ENCODE measurements at regions of chr3 and their contacts with region 1.

Region 1: DNA sequence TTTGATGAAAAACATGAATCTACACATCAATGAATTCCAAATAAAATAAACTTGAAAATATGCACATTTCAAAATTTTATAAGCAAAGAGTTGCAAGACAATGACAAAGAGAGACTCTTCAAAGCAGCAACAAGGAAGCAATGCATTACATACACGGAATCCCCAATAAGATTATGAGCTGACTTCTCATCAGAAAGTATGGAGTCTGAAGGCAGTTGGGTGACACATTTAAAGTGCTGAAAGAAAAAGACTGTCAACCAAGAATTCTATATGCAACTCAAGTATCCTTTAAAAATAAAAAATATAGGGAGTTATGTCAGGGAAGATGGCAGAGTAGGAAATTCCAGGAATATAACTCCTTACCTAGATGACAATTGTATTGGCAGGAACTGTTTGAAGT is 46.5 kb upstream of the PRSS50 start:
- DNase-seq: no peak
- ATAC-seq: no peak
- H3K4me3 ChIP-seq: no peak overlapping the region
- H3K27ac ChIP-seq: no peak overlapping the region
- H3K4me1 ChIP-seq: no peaks in the 10 kb centered on the region
- H3K27me3 ChIP-seq: no peaks in the 10 kb centered on the region
- CTCF ChIP-seq: no peak

Region 2: GRCh38 chr3:46656778-46657556 is 107.2 kb before region 1 on chr3:
- CTCF ChIA-PET with region 1: no interaction called
- POLR2A ChIA-PET with region 1: interaction called, 12 read pairs
- in situ Hi-C with region 1: no loop called
- intact Hi-C with region 1: no loop called
- DNase-seq: no peak
- ATAC-seq: no peak
- H3K4me3 ChIP-seq: no peak overlapping the region
- H3K27ac ChIP-seq: no peak overlapping the region
- H3K4me1 ChIP-seq: no peaks in the 10 kb centered on the region
- H3K27me3 ChIP-seq: no peaks in the 10 kb centered on the region
- CTCF ChIP-seq: no peak

Region 3: GRCh38 chr3:46845791-46846623 is 81.8 kb after region 1 on chr3:
- CTCF ChIA-PET with region 1: no interaction called
- POLR2A ChIA-PET with region 1: no interaction called
- in situ Hi-C with region 1: no loop called
- intact Hi-C with region 1: no loop called
- DNase-seq: no peak
- ATAC-seq: peak; percentile 84
- H3K4me3 ChIP-seq: peak overlapping the region; percentile 32 to 45
- H3K27ac ChIP-seq: no peak overlapping the region
- H3K4me1 ChIP-seq: no peaks in the 10 kb centered on the region
- H3K27me3 ChIP-seq: no peaks in the 10 kb centered on the region
- CTCF ChIP-seq: peak; percentile 65